Caco-2 (cell line): ENCODE measurements at regions of chr1 and their contacts with region 1.

Region 1: GRCh38 chr1:235675152-235675890 is 25.7 kb upstream of the GNG4 start:
- DNase-seq: no peak
- H3K4me3 ChIP-seq: no peak overlapping the region
- H3K4me3 Mint-ChIP-seq: no peak overlapping the region
- H3K27ac Mint-ChIP-seq: no peak overlapping the region
- H3K4me1 ChIP-seq: no peaks in the 10 kb centered on the region
- H3K4me1 Mint-ChIP-seq: no peaks in the 10 kb centered on the region
- H3K27me3 ChIP-seq: no peaks in the 10 kb centered on the region
- H3K27me3 Mint-ChIP-seq: no peaks in the 10 kb centered on the region
- CTCF ChIP-seq: no peak

Region 2: GRCh38 chr1:235375919-235376605 is 299.3 kb before region 1 on chr1:
- CTCF ChIA-PET with region 1: no interaction called
- POLR2A ChIA-PET with region 1: no interaction called
- intact Hi-C with region 1: no loop called
- DNase-seq: no peak
- H3K4me3 ChIP-seq: no peak overlapping the region
- H3K4me3 Mint-ChIP-seq: no peak overlapping the region
- H3K27ac Mint-ChIP-seq: no peak overlapping the region
- H3K4me1 ChIP-seq: no peaks in the 10 kb centered on the region
- H3K4me1 Mint-ChIP-seq: no peaks in the 10 kb centered on the region
- H3K27me3 ChIP-seq: no peaks in the 10 kb centered on the region
- H3K27me3 Mint-ChIP-seq: no peaks in the 10 kb centered on the region
- CTCF ChIP-seq: no peak

Region 3: DNA sequence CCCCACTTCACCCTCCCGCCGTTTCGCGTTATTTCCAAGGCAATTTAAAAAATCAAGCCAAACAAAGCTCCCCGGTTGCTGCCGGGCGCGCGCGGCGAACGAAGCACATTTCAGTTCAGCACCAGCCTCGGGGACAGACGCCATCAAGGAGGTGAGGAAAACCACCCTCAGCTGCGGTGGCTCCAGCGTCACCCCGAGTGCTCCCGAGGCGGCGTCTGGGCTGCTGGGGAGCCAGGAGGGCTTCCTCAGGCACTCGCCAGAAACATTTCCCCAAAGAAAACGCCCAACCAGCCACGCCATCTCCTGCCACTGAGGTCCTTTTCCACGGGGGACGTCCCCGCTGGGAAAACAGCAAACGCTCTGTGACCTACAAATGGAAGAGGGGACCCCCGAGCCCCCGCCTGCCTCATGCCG is 26.4 kb before region 1 on chr1:
- CTCF ChIA-PET with region 1: no interaction called
- POLR2A ChIA-PET with region 1: no interaction called
- intact Hi-C with region 1: no loop called
- DNase-seq: peak; percentile 67 to 77
- H3K4me3 ChIP-seq: peak overlapping the region; percentile 57
- H3K4me3 Mint-ChIP-seq: peak overlapping the region; percentile 68
- H3K27ac Mint-ChIP-seq: peak overlapping the region; percentile 8
- H3K4me1 ChIP-seq: peaks cover 18% of the 10 kb centered on the region
- H3K4me1 Mint-ChIP-seq: peaks cover 7% of the 10 kb centered on the region
- H3K27me3 ChIP-seq: no peaks in the 10 kb centered on the region
- H3K27me3 Mint-ChIP-seq: peaks cover 4% of the 10 kb centered on the region
- CTCF ChIP-seq: no peak

Region 4: DNA sequence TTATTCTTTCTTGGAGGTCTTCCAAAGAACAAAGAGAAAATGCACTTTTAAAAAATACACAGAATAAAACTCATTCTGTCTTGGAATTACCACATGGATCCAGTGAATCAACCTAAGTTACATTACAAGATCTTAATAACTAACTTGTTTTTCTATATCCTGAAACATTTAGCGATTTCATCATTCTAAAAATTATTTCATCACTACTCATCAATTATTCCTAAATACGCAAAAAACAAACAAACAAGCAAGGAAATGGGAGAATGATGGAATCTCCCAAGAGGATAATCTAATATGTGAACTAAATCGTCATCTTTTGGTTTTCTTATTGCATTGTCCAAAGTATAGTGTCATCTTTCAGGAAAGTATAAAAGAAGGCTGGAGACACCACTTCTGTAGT is 12.8 kb after region 1 on chr1:
- CTCF ChIA-PET with region 1: no interaction called
- POLR2A ChIA-PET with region 1: no interaction called
- intact Hi-C with region 1: no loop called
- DNase-seq: no peak
- H3K4me3 ChIP-seq: no peak overlapping the region
- H3K4me3 Mint-ChIP-seq: no peak overlapping the region
- H3K27ac Mint-ChIP-seq: no peak overlapping the region
- H3K4me1 ChIP-seq: no peaks in the 10 kb centered on the region
- H3K4me1 Mint-ChIP-seq: no peaks in the 10 kb centered on the region
- H3K27me3 ChIP-seq: no peaks in the 10 kb centered on the region
- H3K27me3 Mint-ChIP-seq: no peaks in the 10 kb centered on the region
- CTCF ChIP-seq: no peak

Region 5: DNA sequence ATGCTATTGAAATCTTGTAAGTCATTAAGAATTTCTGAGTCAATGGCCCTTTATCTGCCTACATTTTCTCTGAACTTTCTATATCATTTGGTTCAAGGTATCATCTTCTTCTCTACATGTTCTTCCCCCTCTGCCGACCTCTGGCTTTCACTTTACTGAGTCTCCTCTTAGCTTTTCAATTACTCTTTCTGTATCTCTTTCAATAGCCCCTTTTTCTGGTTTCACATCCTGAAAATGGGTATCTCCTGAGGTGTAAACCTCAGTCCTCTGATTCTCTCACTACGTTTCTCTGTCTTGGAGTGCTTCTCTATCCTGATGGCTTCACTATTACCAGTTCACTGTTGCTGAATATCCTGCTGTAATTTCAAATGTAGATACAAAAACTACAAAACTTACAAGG is 92.5 kb after region 1 on chr1:
- CTCF ChIA-PET with region 1: no interaction called
- POLR2A ChIA-PET with region 1: no interaction called
- intact Hi-C with region 1: no loop called
- DNase-seq: no peak
- H3K4me3 ChIP-seq: no peak overlapping the region
- H3K4me3 Mint-ChIP-seq: no peak overlapping the region
- H3K27ac Mint-ChIP-seq: no peak overlapping the region
- H3K4me1 ChIP-seq: no peaks in the 10 kb centered on the region
- H3K4me1 Mint-ChIP-seq: no peaks in the 10 kb centered on the region
- H3K27me3 ChIP-seq: no peaks in the 10 kb centered on the region
- H3K27me3 Mint-ChIP-seq: no peaks in the 10 kb centered on the region
- CTCF ChIP-seq: no peak

Region 6: GRCh38 chr1:236214761-236215160 is 539.4 kb after region 1 on chr1:
- CTCF ChIA-PET with region 1: no interaction called
- POLR2A ChIA-PET with region 1: no interaction called
- intact Hi-C with region 1: loop called (anchors 5 kb)
- DNase-seq: no peak
- H3K4me3 ChIP-seq: no peak overlapping the region
- H3K4me3 Mint-ChIP-seq: no peak overlapping the region
- H3K27ac Mint-ChIP-seq: no peak overlapping the region
- H3K4me1 ChIP-seq: no peaks in the 10 kb centered on the region
- H3K4me1 Mint-ChIP-seq: no peaks in the 10 kb centered on the region
- H3K27me3 ChIP-seq: no peaks in the 10 kb centered on the region
- H3K27me3 Mint-ChIP-seq: no peaks in the 10 kb centered on the region
- CTCF ChIP-seq: no peak